CD4-positive, alpha-beta memory T cell (primary cell): ENCODE measurements at regions of chrX and their contacts with region 1.

Region 1: GRCh38 chrX:9341291-9342201 is 123.3 kb upstream of the TBL1X start:
- DNase-seq: peak; percentile 64 to 77 (median 72)
- H3K4me3 ChIP-seq: peak overlapping the region; percentile 4 to 36
- H3K4me3 Mint-ChIP-seq: peak overlapping the region; percentile 77 to 89 (median 84)
- H3K27ac ChIP-seq: peak overlapping the region; percentile 58
- H3K27ac Mint-ChIP-seq: peak overlapping the region; percentile 94 to 98 (median 95)
- H3K4me1 ChIP-seq: peaks cover 51% of the 10 kb centered on the region
- H3K4me1 Mint-ChIP-seq: peaks cover 29 to 53% (median 40%) of the 10 kb centered on the region in 4 donors
- H3K27me3 ChIP-seq: no peaks in the 10 kb centered on the region
- H3K27me3 Mint-ChIP-seq: no peaks in the 10 kb centered on the region

Region 2: DNA sequence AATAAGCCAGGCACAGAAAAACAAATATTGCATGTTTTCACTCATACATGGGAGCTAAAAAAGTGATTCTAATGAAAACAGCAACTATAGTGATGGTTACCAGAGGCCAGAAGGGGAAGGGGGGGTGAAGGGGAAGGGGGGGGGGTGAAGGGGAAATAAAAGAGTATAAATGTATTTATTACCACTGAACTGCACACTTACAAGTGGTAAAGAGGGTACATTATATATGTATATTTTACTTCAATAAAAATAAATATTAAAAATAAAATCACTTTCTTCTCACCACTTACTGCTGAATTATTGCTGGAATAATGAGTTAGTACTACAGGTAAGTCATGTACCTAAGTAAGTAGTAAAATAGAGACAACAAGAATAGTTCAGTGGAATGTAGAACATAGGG is 879.1 kb before region 1 on chrX:
- CTCF ChIA-PET with region 1: no interaction called
- POLR2A ChIA-PET with region 1: no interaction called
- intact Hi-C with region 1: no loop called
- DNase-seq: no peak
- H3K4me3 ChIP-seq: no peak overlapping the region
- H3K4me3 Mint-ChIP-seq: no peak overlapping the region
- H3K27ac ChIP-seq: no peak overlapping the region
- H3K27ac Mint-ChIP-seq: no peak overlapping the region
- H3K4me1 ChIP-seq: no peaks in the 10 kb centered on the region
- H3K4me1 Mint-ChIP-seq: no peaks in the 10 kb centered on the region
- H3K27me3 ChIP-seq: no peaks in the 10 kb centered on the region
- H3K27me3 Mint-ChIP-seq: no peaks in the 10 kb centered on the region

Region 3: DNA sequence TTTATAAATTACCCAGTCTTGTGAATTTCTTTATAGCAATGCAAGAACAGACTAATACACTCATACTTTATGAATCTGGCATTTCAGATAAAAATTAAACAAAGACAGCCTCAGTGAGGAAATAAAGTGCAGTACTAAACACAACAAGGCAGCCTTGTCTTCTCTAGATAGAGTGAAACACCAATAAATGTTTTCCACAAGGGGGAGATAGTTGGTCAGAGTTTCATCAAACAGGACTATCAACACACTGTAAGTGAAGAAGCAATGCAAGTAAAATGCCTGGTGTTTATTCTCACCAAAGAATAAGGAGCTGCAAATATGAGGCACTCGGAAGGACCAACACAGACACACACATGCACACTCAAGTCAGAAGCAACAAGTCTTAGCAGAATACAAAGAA is 370.4 kb before region 1 on chrX:
- CTCF ChIA-PET with region 1: no interaction called
- POLR2A ChIA-PET with region 1: interaction called, 4 read pairs
- intact Hi-C with region 1: loop called (anchors 1 kb)
- DNase-seq: peak in 4 of 5 donors; percentile 47 to 63 (median 50)
- H3K4me3 ChIP-seq: no peak overlapping the region
- H3K4me3 Mint-ChIP-seq: no peak overlapping the region
- H3K27ac ChIP-seq: no peak overlapping the region
- H3K27ac Mint-ChIP-seq: peak overlapping the region in 2 of 7 donors; percentile 0 to 10
- H3K4me1 ChIP-seq: no peaks in the 10 kb centered on the region
- H3K4me1 Mint-ChIP-seq: peaks cover 0 to 2% (median 0%) of the 10 kb centered on the region in 4 donors
- H3K27me3 ChIP-seq: no peaks in the 10 kb centered on the region
- H3K27me3 Mint-ChIP-seq: no peaks in the 10 kb centered on the region

Region 4: GRCh38 chrX:9163214-9163681 is 178.3 kb before region 1 on chrX:
- CTCF ChIA-PET with region 1: interaction called, 3 read pairs
- POLR2A ChIA-PET with region 1: interaction called, 13 read pairs
- intact Hi-C with region 1: loop called (anchors 2 kb)
- DNase-seq: no peak
- H3K4me3 ChIP-seq: no peak overlapping the region
- H3K4me3 Mint-ChIP-seq: peak overlapping the region in 1 of 8 donors; percentile 7
- H3K27ac ChIP-seq: no peak overlapping the region
- H3K27ac Mint-ChIP-seq: peak overlapping the region in 1 of 7 donors; percentile 53
- H3K4me1 ChIP-seq: peaks cover 24% of the 10 kb centered on the region
- H3K4me1 Mint-ChIP-seq: peaks cover 16 to 35% (median 24%) of the 10 kb centered on the region in 4 donors
- H3K27me3 ChIP-seq: no peaks in the 10 kb centered on the region
- H3K27me3 Mint-ChIP-seq: no peaks in the 10 kb centered on the region

Region 5: DNA sequence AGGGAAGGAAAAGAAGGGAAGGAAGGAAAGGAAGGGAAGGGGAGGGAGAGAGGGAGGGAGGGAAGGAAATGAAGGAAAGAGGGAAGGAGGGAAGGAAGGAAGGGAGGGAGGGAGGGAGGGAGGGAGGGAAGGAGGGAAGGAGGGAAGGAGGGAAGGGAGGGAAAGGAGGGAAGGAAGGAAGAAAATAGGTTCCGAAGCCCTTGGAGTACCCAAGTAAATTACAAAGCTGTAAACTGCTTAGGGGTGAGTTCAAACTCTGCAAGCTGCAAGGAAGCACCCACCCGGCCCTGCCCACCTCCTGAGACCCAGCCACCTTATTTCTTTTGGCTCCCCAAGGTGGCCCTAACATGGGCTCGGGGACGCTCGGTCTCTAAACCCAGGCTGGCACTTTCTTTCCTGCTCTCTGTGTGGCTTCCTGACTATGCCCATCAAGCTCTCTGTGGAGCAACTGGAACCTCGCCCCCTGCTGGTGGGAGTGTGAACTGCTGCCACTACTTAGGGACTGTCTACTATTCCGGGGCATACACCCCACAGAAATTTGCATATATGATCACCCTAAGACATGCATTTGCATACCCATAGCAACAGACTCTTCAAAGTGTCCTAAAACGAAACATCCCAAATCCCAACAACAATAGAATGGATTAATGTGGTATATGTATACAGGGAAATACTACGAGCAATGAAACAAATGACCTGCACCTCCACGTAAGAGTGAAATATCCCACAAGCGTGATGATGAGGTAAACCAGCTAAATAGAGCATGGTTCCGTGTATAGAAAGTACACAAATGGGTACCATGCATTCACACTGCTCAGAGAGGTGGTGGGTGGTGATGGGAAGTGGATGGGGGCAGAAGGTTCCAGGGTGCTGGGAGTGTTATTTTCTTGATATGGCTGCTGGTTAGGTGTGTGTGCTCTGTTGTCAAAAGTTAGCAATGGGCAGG is 28.4 kb before region 1 on chrX:
- CTCF ChIA-PET with region 1: interaction called, 41 read pairs
- POLR2A ChIA-PET with region 1: interaction called, 17 read pairs
- intact Hi-C with region 1: loop called (anchors 1 kb)
- DNase-seq: peak; percentile 60 to 72 (median 67)
- H3K4me3 ChIP-seq: no peak overlapping the region
- H3K4me3 Mint-ChIP-seq: peak overlapping the region in 4 of 8 donors; percentile 62 to 77 (median 66)
- H3K27ac ChIP-seq: no peak overlapping the region
- H3K27ac Mint-ChIP-seq: peak overlapping the region in 3 of 7 donors; percentile 9 to 53 (median 23)
- H3K4me1 ChIP-seq: no peaks in the 10 kb centered on the region
- H3K4me1 Mint-ChIP-seq: peaks cover 11 to 16% (median 12%) of the 10 kb centered on the region in 4 donors
- H3K27me3 ChIP-seq: no peaks in the 10 kb centered on the region
- H3K27me3 Mint-ChIP-seq: no peaks in the 10 kb centered on the region

Region 6: GRCh38 chrX:9318213-9318612 is 23.3 kb before region 1 on chrX:
- CTCF ChIA-PET with region 1: interaction called, 41 read pairs
- POLR2A ChIA-PET with region 1: interaction called, 17 read pairs
- intact Hi-C with region 1: loop called (anchors 1 kb)
- DNase-seq: peak; percentile 15 to 53 (median 38)
- H3K4me3 ChIP-seq: no peak overlapping the region
- H3K4me3 Mint-ChIP-seq: no peak overlapping the region
- H3K27ac ChIP-seq: no peak overlapping the region
- H3K27ac Mint-ChIP-seq: peak overlapping the region in 3 of 7 donors; percentile 29 to 52 (median 52)
- H3K4me1 ChIP-seq: peaks cover 8% of the 10 kb centered on the region
- H3K4me1 Mint-ChIP-seq: peaks cover 13 to 23% (median 17%) of the 10 kb centered on the region in 4 donors
- H3K27me3 ChIP-seq: no peaks in the 10 kb centered on the region
- H3K27me3 Mint-ChIP-seq: no peaks in the 10 kb centered on the region

Region 7: GRCh38 chrX:9352694-9353411 is 11.3 kb after region 1 on chrX:
- CTCF ChIA-PET with region 1: interaction called, 4 read pairs
- POLR2A ChIA-PET with region 1: interaction called, 22 read pairs
- intact Hi-C with region 1: loop called (anchors 1 kb)
- DNase-seq: peak in 3 of 5 donors; percentile 19 to 39 (median 24)
- H3K4me3 ChIP-seq: peak overlapping the region in 1 of 2 donors; percentile 35
- H3K4me3 Mint-ChIP-seq: peak overlapping the region; percentile 62 to 81 (median 77)
- H3K27ac ChIP-seq: peak overlapping the region; percentile 21
- H3K27ac Mint-ChIP-seq: peak overlapping the region; percentile 47 to 96 (median 92)
- H3K4me1 ChIP-seq: peaks cover 43% of the 10 kb centered on the region
- H3K4me1 Mint-ChIP-seq: peaks cover 20 to 40% (median 37%) of the 10 kb centered on the region in 4 donors
- H3K27me3 ChIP-seq: no peaks in the 10 kb centered on the region
- H3K27me3 Mint-ChIP-seq: no peaks in the 10 kb centered on the region

Region 8: DNA sequence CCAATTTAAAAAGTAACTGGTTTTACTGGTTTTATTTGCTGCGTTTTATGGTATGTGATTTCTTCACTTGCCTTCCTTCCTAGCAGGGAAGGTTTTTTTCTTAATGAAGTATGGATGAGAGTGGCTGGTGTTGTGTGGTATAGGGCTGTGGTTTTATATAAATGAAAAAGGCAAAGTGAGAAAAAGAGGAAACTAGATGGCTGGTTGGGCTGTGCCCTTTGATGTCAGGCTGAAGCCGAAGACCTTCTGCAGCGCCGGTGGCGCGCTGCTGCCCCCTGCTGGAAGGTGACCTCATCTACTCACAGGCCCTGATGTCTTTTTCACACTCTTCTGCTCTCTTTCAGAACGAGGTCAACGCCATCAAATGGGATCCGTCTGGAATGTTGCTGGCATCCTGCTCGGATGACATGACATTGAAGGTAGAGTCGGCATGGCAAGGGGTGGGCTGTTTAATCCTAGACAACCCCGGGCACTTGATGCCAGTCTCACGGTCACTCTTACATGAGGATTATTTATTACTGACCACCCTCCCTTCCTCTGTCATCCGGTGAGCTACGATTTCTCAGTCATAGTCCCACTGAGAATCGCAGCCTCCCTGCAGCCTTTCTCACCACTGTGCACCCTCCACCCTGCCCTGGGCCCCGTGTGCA is 367.5 kb after region 1 on chrX:
- CTCF ChIA-PET with region 1: no interaction called
- POLR2A ChIA-PET with region 1: no interaction called
- intact Hi-C with region 1: loop called (anchors 2 kb)
- DNase-seq: peak; percentile 71 to 80 (median 79)
- H3K4me3 ChIP-seq: no peak overlapping the region
- H3K4me3 Mint-ChIP-seq: peak overlapping the region in 3 of 8 donors; percentile 7 to 57 (median 35)
- H3K27ac ChIP-seq: no peak overlapping the region
- H3K27ac Mint-ChIP-seq: peak overlapping the region in 4 of 7 donors; percentile 14 to 92 (median 42)
- H3K4me1 ChIP-seq: peaks cover 6% of the 10 kb centered on the region
- H3K4me1 Mint-ChIP-seq: peaks cover 5 to 13% (median 11%) of the 10 kb centered on the region in 4 donors
- H3K27me3 ChIP-seq: no peaks in the 10 kb centered on the region
- H3K27me3 Mint-ChIP-seq: no peaks in the 10 kb centered on the region